Thyroid gland (tissue), 4 donors: ENCODE measurements at regions of chr15 and their contacts with region 1.

Region 1: DNA sequence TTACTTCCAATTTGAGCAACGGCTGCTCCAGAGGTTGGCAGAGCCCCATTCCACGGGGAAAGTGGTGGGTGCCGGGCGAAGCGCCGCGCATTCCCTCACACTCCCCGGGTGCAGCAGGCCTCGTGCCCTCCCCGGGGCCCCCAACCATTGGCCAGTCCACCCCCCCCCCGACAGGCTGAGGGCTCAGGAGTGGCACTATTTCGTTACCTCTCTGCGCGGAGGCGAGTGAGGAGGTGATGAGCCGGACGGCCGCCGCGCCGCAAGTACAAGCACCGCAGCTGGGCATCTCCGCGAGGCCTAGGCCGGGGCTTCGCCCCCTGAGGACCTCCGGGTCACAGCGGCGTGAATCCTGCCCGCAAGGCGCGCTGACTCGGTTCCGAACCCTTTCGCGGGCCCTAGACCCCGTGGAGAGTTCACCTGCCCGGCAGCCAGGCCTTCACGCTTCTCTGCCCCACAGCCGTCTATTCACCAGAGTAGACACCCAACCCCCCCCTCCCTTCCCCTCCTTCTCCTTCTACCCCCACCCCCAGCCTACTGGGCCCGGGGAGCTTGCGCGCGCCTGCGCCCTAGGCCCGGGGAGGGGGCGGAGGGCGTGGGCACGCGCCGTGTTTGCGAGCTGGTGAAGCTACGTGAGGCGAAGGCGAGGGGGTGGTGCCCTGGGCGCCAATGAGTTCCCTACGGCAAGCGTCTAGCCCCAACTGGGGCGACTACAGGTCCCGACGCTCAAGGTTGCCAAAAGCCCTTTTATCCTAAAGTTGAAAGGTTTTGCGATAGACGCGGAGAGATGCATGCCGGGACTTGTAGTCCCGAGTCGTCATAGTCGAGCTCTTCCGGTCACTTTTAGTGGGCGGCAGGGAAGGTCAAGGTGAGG is at the start of gene CLPX:
- DNase-seq: peak; percentile 94 to 95
- H3K4me3 ChIP-seq: peak within 1 kb of the TSS; percentile 44 to 92 (median 82)
- H3K27ac ChIP-seq: peak within 1 kb of the TSS; percentile 67 to 96 (median 88)
- H3K4me1 ChIP-seq: peaks cover 9 to 10% of the 10 kb centered on the region in 2 donors
- H3K27me3 ChIP-seq: no peaks in the 10 kb centered on the region
- CTCF ChIP-seq: peak in 1 of 6 experiments; percentile 12
- POLR2A ChIP-seq: peak in 1 of 2 donors; percentile 81
- total RNA-seq, gene CLPX: 37.9 to 57.5 (median 46.4) TPM

Region 2: GRCh38 chr15:65286704-65287519 is 101.8 kb after region 1 on chr15 and contains the start of gene PARP16:
- intact Hi-C with region 1: loop called (anchors 5 kb)
- DNase-seq: peak; percentile 94
- H3K4me3 ChIP-seq: peak within 1 kb of the TSS; percentile 69 to 85 (median 85)
- H3K27ac ChIP-seq: peak within 1 kb of the TSS; percentile 85 to 90 (median 88)
- H3K4me1 ChIP-seq: peaks cover 2 to 13% of the 10 kb centered on the region in 2 donors
- H3K27me3 ChIP-seq: no peaks in the 10 kb centered on the region
- CTCF ChIP-seq: peak in 3 of 6 experiments; percentile 53 to 71 (median 63)
- POLR2A ChIP-seq: peak; percentile 46 to 94
- total RNA-seq, gene PARP16: 11.3 to 15.5 (median 13.2) TPM

Region 3: GRCh38 chr15:65298731-65299130 is 113.6 kb after region 1 on chr15:
- intact Hi-C with region 1: loop called (anchors 5 kb)
- DNase-seq: no peak
- H3K4me3 ChIP-seq: no peak overlapping the region
- H3K27ac ChIP-seq: no peak overlapping the region
- H3K4me1 ChIP-seq: peaks cover 4 to 25% of the 10 kb centered on the region in 2 donors
- H3K27me3 ChIP-seq: no peaks in the 10 kb centered on the region
- CTCF ChIP-seq: no peak
- POLR2A ChIP-seq: no peak